MCF 10A (cell line): ENCODE measurements at regions of chr4 and their contacts with region 1.

Region 1: GRCh38 chr4:6716018-6716911 is at the start of gene BLOC1S4:
- DNase-seq: peak; percentile 87
- H3K4me3 Mint-ChIP-seq: peak within 1 kb of the TSS; percentile 80
- H3K27ac Mint-ChIP-seq: peak within 1 kb of the TSS; percentile 81
- H3K4me1 Mint-ChIP-seq: peaks cover 13% of the 10 kb centered on the region
- H3K27me3 Mint-ChIP-seq: no peaks in the 10 kb centered on the region
- CTCF ChIP-seq: no peak
- total RNA-seq, gene BLOC1S4: 10.6 and 13.0 TPM in 2 replicates

Region 2: DNA sequence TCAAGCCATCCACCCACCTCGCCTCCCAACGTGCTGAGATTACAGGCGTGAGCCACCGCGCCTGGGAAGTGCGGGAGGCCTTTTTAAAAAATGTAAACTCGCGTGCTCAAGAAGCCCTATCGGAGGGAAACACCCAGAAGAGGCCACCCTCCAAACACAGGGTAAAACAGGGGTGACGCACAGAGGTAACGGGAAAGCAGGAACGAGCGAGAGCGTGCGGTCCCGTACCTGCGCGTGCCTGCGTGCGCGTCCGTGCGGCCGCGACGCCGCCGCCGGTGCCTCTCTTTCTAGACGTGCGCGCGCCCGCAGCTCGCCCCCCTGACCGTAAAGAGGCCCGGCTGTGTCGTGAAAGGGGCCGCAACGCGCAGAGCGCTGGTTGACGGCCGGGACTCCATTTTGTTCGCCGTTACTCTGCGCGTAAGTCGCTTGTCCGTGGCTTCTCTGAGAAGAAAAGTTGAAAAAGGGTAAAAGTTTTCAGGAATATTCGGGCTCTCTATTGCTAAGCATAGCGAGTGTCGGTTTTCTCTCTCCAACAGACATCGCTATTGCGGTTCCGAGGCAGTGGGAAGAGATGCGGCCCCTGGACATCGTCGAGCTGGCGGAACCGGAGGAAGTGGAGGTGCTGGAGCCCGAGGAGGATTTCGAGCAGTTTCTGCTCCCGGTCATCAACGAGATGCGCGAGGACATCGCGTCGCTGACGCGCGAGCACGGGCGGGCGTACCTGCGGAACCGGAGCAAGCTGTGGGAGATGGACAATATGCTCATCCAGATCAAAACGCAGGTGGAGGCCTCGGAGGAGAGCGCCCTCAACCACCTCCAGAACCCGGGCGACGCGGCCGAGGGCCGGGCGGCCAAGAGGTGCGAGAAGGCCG is 75.7 kb before region 1 on chr4 and contains the start of gene MRFAP1:
- CTCF ChIA-PET with region 1: no interaction called
- POLR2A ChIA-PET with region 1: interaction called, 47 read pairs
- intact Hi-C with region 1: no loop called
- DNase-seq: peak; percentile 95
- H3K4me3 Mint-ChIP-seq: peak within 1 kb of the TSS; percentile 99
- H3K27ac Mint-ChIP-seq: peak within 1 kb of the TSS; percentile 95
- H3K4me1 Mint-ChIP-seq: peaks cover 24% of the 10 kb centered on the region
- H3K27me3 Mint-ChIP-seq: no peaks in the 10 kb centered on the region
- CTCF ChIP-seq: no peak
- total RNA-seq, gene MRFAP1: 387 and 481 TPM in 2 replicates

Region 3: GRCh38 chr4:6695660-6696630 is 20.3 kb before region 1 on chr4:
- CTCF ChIA-PET with region 1: interaction called, 5 read pairs
- POLR2A ChIA-PET with region 1: interaction called, 18 read pairs
- intact Hi-C with region 1: no loop called
- DNase-seq: peak; percentile 77
- H3K4me3 Mint-ChIP-seq: peak overlapping the region; percentile 47
- H3K27ac Mint-ChIP-seq: peak overlapping the region; percentile 95
- H3K4me1 Mint-ChIP-seq: peaks cover 37% of the 10 kb centered on the region
- H3K27me3 Mint-ChIP-seq: no peaks in the 10 kb centered on the region
- CTCF ChIP-seq: peak; percentile 20

Region 4: GRCh38 chr4:6761649-6762602 is 45.7 kb after region 1 on chr4:
- CTCF ChIA-PET with region 1: interaction called, 13 read pairs
- POLR2A ChIA-PET with region 1: interaction called, 3 read pairs
- intact Hi-C with region 1: loop called (anchors 1 kb)
- DNase-seq: no peak
- H3K4me3 Mint-ChIP-seq: no peak overlapping the region
- H3K27ac Mint-ChIP-seq: no peak overlapping the region
- H3K4me1 Mint-ChIP-seq: peaks cover 25% of the 10 kb centered on the region
- H3K27me3 Mint-ChIP-seq: no peaks in the 10 kb centered on the region
- CTCF ChIP-seq: no peak

Region 5: DNA sequence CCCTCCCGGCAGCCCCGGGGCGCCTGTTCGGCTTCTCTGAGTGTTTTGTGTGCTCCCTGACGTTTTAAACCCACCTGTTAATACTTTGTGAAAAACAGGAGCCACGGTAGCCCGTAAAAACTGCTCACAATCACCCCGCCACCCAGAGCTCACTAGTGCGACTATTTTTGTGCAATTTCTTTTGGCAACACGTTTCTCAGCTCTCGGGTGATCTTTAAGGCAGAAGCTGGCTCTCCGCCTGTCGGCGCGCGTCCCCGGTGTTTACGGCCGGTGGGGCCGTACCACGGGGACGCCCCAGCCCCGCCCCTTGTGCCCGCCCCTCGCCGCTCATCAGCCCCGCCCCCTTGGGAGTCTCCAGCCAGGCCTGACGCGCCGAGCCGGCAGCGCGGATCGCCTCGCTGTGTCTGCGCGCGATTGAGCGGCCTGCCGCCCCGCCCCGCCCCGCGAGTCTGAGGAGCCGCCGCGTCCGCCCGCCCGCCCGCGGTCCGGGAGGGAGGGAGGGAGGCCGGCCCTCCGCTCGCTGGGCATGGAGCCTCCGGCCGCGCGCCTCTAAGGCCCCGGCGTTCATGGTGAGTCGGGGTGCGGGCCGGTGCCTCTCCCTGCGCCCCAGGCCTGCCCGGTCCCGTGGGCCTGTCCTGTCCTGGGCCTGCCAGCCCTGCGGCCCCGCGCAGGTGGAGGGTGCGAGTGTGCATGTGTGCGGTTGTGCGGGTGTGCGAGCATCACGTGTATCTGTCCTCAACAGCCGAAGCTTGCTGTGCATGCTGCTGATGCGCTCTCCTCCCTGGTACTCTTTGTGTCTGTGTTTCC is 270.7 kb after region 1 on chr4:
- CTCF ChIA-PET with region 1: interaction called, 5 read pairs
- POLR2A ChIA-PET with region 1: interaction called, 8 read pairs
- intact Hi-C with region 1: loop called (anchors 5 kb)
- DNase-seq: peak; percentile 95
- H3K4me3 Mint-ChIP-seq: peak overlapping the region; percentile 97
- H3K27ac Mint-ChIP-seq: peak overlapping the region; percentile 95
- H3K4me1 Mint-ChIP-seq: peaks cover 45% of the 10 kb centered on the region
- H3K27me3 Mint-ChIP-seq: no peaks in the 10 kb centered on the region
- CTCF ChIP-seq: no peak